PC-9 (cell line): ENCODE measurements at regions of chr3 and their contacts with region 1.

Region 1: DNA sequence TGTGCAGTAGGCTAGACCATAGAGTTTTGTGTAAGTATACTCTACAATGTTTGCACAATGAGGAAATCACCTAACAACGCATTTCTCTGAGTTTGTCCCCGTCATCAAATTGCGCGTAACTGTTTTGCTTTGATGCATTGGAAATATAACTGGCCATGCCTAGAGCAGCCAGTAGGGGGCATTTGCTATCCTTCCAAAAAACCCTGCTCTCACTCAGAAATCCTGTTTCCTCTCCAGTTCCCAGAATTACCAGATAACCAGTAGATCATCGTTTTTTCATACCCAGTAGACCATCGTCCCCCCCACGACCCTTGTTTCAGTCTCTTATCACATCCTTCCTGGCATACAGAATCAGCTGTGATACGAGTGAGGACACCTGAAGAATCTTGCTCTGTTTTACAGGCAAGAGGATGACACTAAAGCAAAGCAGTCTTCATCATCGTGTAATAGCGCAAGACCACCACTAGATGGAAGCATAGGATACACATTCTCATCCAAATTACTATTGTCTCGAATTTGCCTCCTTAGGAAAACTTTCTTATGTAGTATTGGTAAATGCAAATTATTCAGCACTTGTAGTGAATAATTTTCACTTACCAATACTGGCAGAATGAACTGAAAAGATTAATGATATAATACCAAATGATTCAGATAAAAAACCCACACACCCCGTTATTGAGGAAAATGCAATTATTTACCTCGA is 4.4 kb upstream of the GABRR3 start:
- DNase-seq: peak; percentile 74 to 81
- H3K4me3 ChIP-seq: peak overlapping the region; percentile 50; the same call in 1 of the 2 replicates
- H3K27ac ChIP-seq: no peak overlapping the region
- H3K4me1 ChIP-seq: peaks cover 9% of the 10 kb centered on the region; the same call in 1 of the 2 replicates
- H3K27me3 ChIP-seq: no peaks in the 10 kb centered on the region
- CTCF ChIP-seq: peak; percentile 100

Region 2: GRCh38 chr3:98188545-98188944 is 149.1 kb after region 1 on chr3:
- CTCF ChIA-PET with region 1: no interaction called
- POLR2A ChIA-PET with region 1: no interaction called
- intact Hi-C with region 1: loop called (anchors 1 kb)
- DNase-seq: no peak
- H3K4me3 ChIP-seq: no peak overlapping the region
- H3K27ac ChIP-seq: no peak overlapping the region
- H3K4me1 ChIP-seq: no peaks in the 10 kb centered on the region
- H3K27me3 ChIP-seq: no peaks in the 10 kb centered on the region
- CTCF ChIP-seq: peak; percentile 50; the same call in 1 of the 2 replicates

Region 3: DNA sequence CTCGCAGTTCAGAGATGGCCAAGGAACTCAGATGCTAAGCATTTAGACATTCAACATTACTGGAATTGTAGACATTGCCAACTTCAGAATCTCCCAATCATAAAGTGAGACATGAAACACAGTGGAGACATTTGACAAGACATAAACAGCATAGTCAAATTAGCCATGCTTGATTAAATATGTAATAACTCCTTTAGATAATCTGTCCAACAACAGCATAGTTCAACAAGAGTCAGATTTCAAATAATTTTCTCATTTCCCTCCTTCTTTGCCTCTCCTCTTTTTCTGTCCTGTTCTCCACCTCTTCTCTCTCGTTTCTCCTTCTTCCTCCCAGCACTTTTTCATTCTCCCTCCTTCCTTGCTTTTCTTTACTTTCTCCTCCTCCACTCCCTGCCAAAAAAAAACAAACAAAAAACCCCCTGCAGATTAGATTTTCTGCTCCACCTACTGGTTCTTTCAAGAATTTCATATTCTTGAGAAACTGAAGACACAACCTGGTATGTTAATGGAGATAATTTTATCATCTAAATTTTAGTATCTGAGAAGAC is 533.8 kb after region 1 on chr3:
- CTCF ChIA-PET with region 1: interaction called, 14 read pairs
- POLR2A ChIA-PET with region 1: no interaction called
- intact Hi-C with region 1: loop called (anchors 1 kb)
- DNase-seq: no peak
- H3K4me3 ChIP-seq: no peak overlapping the region
- H3K27ac ChIP-seq: no peak overlapping the region
- H3K4me1 ChIP-seq: peaks cover 21% of the 10 kb centered on the region
- H3K27me3 ChIP-seq: no peaks in the 10 kb centered on the region
- CTCF ChIP-seq: peak; percentile 95

Region 4: GRCh38 chr3:98602078-98602678 is 562.7 kb after region 1 on chr3:
- CTCF ChIA-PET with region 1: no interaction called
- POLR2A ChIA-PET with region 1: no interaction called
- intact Hi-C with region 1: loop called (anchors 5 kb)
- DNase-seq: peak; percentile 29 to 61
- H3K4me3 ChIP-seq: no peak overlapping the region
- H3K27ac ChIP-seq: no peak overlapping the region
- H3K4me1 ChIP-seq: no peaks in the 10 kb centered on the region
- H3K27me3 ChIP-seq: no peaks in the 10 kb centered on the region
- CTCF ChIP-seq: peak; percentile 95

Region 5: DNA sequence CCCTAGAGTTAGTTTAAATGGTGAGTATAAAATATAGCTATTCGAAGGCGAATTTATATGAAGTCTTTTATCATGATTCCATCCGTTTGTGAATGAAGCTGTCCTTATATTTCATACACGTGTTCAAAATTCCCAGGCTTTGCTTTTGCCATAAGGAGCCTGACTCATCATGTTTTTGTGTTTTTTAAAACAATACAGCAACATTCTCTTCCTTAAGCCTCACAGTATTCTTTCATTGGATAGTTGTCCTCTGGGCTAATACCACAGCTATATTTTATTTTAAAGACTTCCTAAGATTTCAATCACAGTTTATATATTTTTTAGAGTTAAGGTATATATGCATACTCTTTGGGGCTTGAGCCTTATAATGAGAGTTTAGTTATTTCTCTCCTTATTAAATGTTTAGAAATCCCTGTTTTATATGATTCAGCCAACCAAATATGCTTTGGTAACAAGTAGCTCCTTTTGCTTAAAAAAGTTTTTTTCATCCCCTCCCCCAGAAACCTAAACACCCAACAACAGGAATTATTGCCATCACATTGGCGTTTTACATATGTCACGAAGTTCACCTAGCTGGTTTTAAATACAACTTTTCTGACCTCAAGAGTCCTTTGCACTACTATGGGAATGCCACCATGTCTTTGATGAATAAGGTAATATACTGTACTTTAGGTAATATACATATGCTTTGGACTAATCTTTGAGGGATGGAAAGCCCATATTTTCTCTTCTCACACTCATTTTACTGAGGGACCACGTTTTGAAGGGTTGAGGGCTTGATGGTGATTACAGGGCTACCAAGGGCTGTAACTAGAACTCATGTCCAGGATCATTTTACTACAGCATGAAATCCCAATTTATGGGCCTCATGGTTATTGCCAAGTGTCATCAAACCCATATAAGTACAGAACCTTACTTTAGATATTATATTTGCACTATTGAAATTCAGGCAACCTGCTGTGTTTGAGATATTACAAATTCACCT is 752.2 kb after region 1 on chr3:
- CTCF ChIA-PET with region 1: no interaction called
- POLR2A ChIA-PET with region 1: no interaction called
- intact Hi-C with region 1: loop called (anchors 5 kb)
- DNase-seq: no peak
- H3K4me3 ChIP-seq: no peak overlapping the region
- H3K27ac ChIP-seq: no peak overlapping the region
- H3K4me1 ChIP-seq: no peaks in the 10 kb centered on the region
- H3K27me3 ChIP-seq: no peaks in the 10 kb centered on the region
- CTCF ChIP-seq: no peak

Region 6: GRCh38 chr3:98994128-98994762 is 954.8 kb after region 1 on chr3:
- CTCF ChIA-PET with region 1: no interaction called
- POLR2A ChIA-PET with region 1: no interaction called
- intact Hi-C with region 1: loop called (anchors 5 kb)
- DNase-seq: peak in 1 of 2 experiments; percentile 57
- H3K4me3 ChIP-seq: no peak overlapping the region
- H3K27ac ChIP-seq: no peak overlapping the region
- H3K4me1 ChIP-seq: no peaks in the 10 kb centered on the region
- H3K27me3 ChIP-seq: no peaks in the 10 kb centered on the region
- CTCF ChIP-seq: peak; percentile 97